ENCODE measurements at regions of chr1 and their contacts with region 1.

Region 1: DNA sequence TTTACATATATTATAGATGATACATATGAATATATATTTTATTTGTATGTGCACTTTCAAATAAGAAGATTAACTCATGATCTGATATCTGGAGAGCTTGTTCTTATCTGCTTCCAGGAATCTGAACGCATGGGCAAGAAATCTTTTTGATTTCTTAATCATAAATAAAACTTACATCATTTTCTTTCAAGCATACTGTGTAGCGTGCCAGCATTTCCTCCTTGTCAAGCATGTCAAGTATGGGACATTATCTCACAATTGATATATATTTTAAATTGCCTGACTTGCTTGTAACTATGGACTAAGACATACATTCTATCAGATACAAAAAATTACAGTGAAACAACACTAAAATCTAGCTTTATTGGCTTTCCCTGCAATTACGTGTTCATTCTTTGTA is 1128.2 kb downstream of the PLA2G4A start:
- H3K4me3 Mint-ChIP-seq: no peak overlapping the region
- H3K27ac Mint-ChIP-seq: no peak overlapping the region
- H3K4me1 Mint-ChIP-seq: no peaks in the 10 kb centered on the region
- H3K27me3 Mint-ChIP-seq: no peaks in the 10 kb centered on the region

Region 2: DNA sequence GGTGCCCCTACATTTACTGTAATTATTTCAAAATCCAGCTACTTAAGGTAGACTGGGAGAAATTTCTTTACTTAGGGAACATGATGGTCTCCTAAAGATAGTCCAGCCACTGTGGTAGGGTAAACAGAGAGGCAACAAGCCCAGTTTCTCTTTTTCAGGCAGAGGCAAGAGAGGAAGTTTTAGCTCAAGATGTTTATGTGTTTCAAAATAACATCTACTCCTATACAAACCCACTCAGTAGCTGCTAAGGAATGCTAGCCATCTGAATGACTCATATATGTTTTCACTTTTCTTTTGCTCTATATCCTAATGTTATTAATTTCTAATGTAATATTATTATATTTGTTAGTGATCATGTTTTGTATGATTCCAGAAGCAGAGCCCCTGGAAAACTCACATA is 271.6 kb before region 1 on chr1:
- intact Hi-C with region 1: no loop called
- H3K4me3 Mint-ChIP-seq: no peak overlapping the region
- H3K27ac Mint-ChIP-seq: no peak overlapping the region
- H3K4me1 Mint-ChIP-seq: no peaks in the 10 kb centered on the region
- H3K27me3 Mint-ChIP-seq: no peaks in the 10 kb centered on the region

Region 3: GRCh38 chr1:187773168-187773567 is 183.8 kb before region 1 on chr1:
- intact Hi-C with region 1: no loop called
- H3K4me3 Mint-ChIP-seq: no peak overlapping the region
- H3K27ac Mint-ChIP-seq: no peak overlapping the region
- H3K4me1 Mint-ChIP-seq: no peaks in the 10 kb centered on the region
- H3K27me3 Mint-ChIP-seq: no peaks in the 10 kb centered on the region

Region 4: GRCh38 chr1:188017921-188018320 is 61.0 kb after region 1 on chr1:
- intact Hi-C with region 1: loop called (anchors 10 kb)
- H3K4me3 Mint-ChIP-seq: no peak overlapping the region
- H3K27ac Mint-ChIP-seq: no peak overlapping the region
- H3K4me1 Mint-ChIP-seq: no peaks in the 10 kb centered on the region
- H3K27me3 Mint-ChIP-seq: no peaks in the 10 kb centered on the region

Region 5: DNA sequence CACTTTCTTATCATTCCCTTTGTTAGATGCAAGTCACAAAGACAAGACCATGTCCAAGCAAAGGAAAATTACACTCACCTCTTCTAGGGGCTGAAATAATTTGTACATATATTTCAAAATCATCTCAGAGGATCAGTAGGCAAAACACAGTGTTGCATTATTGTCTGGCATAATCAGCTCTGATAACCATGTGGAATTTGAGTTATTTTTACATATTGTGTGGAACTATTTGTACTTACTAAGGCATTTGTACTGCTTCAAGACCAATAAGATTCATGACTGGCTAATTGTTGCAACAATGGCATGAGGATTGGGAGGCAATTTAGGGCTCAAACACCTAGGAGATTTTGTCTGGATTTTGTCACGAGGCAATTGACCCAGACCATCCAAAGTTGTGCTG is 804.3 kb after region 1 on chr1:
- intact Hi-C with region 1: no loop called
- H3K4me3 Mint-ChIP-seq: no peak overlapping the region
- H3K27ac Mint-ChIP-seq: no peak overlapping the region
- H3K4me1 Mint-ChIP-seq: no peaks in the 10 kb centered on the region
- H3K27me3 Mint-ChIP-seq: no peaks in the 10 kb centered on the region